ENCODE measurements at regions of chr4 and their contacts with region 1.

Region 1: DNA sequence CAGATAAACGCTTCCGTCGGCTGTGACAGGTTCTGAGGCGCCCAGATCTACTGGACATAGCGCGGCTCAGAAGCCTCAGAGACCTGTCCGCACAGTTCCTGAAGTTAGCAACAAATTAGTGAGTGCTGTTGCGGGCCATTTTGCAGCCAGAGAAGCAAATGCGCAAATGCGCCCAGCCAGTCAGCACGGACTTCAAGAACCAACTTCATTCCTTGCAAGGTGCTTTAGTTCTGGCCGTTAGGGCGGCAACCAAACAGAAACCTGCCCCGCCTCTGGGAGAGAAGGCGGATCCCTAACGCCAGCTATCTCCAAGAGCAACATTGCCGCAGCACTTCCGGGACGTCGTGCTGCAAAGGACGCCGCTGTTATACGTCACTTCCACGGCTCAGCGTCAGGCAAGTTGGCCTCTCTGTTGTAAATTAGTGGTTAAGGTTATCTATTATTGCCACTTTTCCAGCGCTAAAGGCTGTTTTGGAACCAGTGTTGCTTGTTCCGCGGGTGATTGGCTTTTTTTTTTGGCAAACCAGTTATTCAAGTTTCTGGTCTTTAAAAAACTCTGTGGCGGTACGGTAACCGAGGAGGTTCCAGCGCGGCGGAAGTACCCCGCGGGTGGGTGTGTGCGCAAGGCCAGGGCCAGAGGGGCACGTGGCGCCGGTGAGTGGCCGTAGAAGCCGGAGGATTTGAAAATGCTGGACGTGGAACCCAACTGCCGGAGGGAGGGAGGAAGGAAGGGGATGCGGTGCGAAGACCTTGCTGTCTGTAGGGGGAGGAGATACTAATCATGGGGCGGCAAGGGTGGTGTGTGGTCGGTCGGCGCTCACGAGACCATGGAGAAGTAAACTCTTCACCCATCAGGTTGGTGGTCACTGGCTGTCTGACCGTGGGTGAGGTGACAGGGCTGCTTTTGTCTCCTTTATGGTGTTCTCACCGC is at the start of gene GAR1:
- DNase-seq: peak; percentile 85 to 86
- ATAC-seq: peak; percentile 99 to 100
- H3K4me3 ChIP-seq: peak within 1 kb of the TSS; percentile 70 to 99 (median 88)
- H3K27ac ChIP-seq: peak within 1 kb of the TSS; percentile 82 to 90 (median 86)
- H3K4me1 ChIP-seq: peaks cover 14 to 22% of the 10 kb centered on the region in 2 donors
- H3K27me3 ChIP-seq: no peaks in the 10 kb centered on the region
- CTCF ChIP-seq: peak in 1 of 5 experiments; percentile 9
- POLR2A ChIP-seq: peak in 1 of 2 donors; percentile 18
- total RNA-seq, gene GAR1: 2.8 to 7.2 (median 3.5) TPM

Region 2: DNA sequence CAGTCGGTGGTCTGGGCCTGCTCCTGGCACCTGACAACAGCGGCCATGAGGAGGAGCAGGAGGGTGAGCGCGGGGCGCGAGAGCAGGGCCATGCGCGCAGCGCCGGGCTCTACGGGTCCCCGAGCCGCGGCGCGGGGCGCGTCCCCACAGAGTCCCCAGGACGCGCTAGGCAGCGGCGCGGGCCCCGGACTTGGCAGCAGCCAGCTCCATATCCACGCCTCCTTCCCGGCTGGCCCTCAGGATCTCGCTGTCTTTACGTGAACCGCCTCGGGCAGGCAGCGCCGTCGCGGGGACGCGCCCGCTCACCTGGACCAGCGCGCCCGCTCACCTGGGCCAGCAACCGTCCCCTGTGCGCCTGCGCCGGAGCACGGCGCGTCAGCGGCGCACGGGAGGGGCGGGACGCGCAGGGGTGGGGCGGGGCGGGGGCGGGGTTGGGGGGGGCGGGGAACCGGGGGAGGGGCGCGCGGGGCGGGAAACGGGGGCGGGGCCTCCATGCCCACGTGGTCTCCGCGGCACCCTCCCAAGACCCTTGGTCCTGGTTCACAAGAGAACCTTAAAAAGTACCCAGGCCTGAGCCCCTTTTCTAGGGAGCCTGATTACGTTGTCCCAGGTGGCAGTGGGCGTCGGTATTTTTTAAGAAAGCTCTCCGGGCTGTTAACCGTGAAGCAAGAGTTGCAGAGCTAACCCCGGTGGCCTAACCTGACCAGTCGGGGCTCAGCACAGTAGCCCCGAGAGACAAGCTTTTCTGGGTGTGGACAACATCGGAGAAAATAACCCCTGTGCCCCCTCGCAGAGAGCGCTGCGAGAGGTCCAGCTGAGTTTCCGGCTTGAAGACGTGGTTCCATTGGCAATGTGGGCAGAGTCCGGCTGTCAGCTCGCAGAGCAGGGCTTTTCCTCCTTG is 85.4 kb before region 1 on chr4 and contains the start of gene PLA2G12A:
- in situ Hi-C with region 1: loop called in 2 of 4 experiments (anchors 10 kb)
- intact Hi-C with region 1: loop called (anchors 1 kb)
- DNase-seq: peak; percentile 54 to 61
- ATAC-seq: peak; percentile 77 to 85
- H3K4me3 ChIP-seq: peak within 1 kb of the TSS; percentile 86 to 99 (median 94)
- H3K27ac ChIP-seq: peak within 1 kb of the TSS; percentile 91 to 96 (median 95)
- H3K4me1 ChIP-seq: peaks cover 14 to 19% of the 10 kb centered on the region in 2 donors
- H3K27me3 ChIP-seq: no peaks in the 10 kb centered on the region
- CTCF ChIP-seq: no peak
- POLR2A ChIP-seq: peak; percentile 71 to 72
- total RNA-seq, gene PLA2G12A: 26.7 to 83.1 (median 57.6) TPM

Region 3: DNA sequence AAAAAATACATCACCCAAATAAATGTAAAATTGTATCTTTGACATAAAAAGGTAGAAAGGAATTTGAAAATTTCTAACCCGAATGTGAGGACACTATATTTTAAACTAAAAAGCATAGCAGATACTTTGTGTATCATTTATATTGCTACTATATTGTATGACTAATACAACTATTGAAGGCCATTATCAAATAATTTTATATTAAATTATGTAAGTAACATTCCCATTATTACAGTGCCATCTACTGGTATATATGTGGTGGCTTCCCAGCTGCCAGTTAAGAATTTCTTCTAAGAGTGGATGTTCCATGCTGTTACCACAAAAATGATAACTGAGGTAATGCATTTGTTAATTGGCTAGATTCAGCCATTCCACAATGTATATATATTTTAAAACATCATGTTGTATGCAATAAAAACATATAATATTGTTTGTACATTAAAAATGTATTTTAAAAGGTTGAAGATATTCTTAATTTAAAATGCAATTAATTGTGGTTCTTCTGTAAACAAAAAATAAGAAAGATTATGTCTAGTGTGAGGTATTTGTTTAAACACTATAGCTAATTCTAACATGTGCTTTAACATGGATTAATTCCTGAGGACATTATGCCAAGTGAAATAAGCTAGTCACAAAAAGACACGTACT is 162.6 kb after region 1 on chr4:
- in situ Hi-C with region 1: no loop called
- intact Hi-C with region 1: loop called (anchors 5 kb)
- DNase-seq: no peak
- ATAC-seq: peak in 1 of 2 donors; percentile 49
- H3K4me3 ChIP-seq: no peak overlapping the region
- H3K27ac ChIP-seq: no peak overlapping the region
- H3K4me1 ChIP-seq: no peaks in the 10 kb centered on the region
- H3K27me3 ChIP-seq: no peaks in the 10 kb centered on the region
- CTCF ChIP-seq: peak in 4 of 5 experiments; percentile 38 to 65 (median 48)
- POLR2A ChIP-seq: no peak

Measured in gastrocnemius medialis (tissue), 4 donors.